WTC11 (cell line): ENCODE measurements at regions of chr20 and their contacts with region 1.

Region 1: GRCh38 chr20:63775096-63775978 is 35.8 kb downstream of the SLC2A4RG start:
- DNase-seq: peak; percentile 91
- ATAC-seq: peak; percentile 84
- H3K4me3 Mint-ChIP-seq: peak overlapping the region; percentile 80
- H3K27ac Mint-ChIP-seq: peak overlapping the region; percentile 93
- H3K4me1 Mint-ChIP-seq: peaks cover 14% of the 10 kb centered on the region
- H3K27me3 Mint-ChIP-seq: peaks cover 4% of the 10 kb centered on the region; the same call in 1 of the 2 replicates
- CTCF ChIP-seq: peak; percentile 95

Region 2: DNA sequence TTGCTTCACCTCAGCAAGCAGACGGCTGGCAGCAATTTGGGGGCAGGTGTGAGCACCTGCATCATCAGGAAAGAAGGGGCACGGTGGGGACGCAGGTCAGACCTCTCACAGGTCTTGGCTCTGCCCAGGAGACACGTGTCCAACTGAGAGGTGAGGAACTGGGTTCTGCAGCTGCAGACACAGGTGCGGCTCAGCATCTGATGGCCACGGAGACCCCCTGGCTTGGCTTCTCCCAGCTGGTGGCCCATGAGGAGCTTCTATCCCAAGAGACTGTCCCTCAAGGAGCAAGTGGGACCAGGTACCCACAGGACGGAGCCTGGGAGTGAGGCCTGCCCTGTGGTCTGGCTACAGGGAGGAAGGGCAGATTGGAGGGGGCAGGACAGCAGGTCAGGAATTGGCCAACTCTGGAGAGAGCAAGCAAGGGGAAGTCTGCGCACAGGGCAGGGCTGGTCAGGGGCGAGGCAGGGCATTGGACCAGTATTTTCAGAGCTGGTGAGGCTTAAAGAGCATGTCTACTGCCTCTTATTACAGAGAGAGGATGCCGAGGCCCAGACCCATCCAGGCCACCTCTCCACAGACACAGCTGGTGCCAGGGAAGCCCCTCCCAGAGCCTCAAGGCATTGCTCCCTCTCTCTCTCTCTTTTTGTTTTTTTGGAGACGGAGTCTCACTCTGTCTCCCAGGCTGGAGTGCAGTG is 126.3 kb before region 1 on chr20:
- CTCF ChIA-PET with region 1: no interaction called
- POLR2A ChIA-PET with region 1: no interaction called
- DNase-seq: no peak
- ATAC-seq: no peak
- H3K4me3 Mint-ChIP-seq: no peak overlapping the region
- H3K27ac Mint-ChIP-seq: peak overlapping the region; percentile 47; the same call in 1 of the 2 replicates
- H3K4me1 Mint-ChIP-seq: peaks cover 8% of the 10 kb centered on the region
- H3K27me3 Mint-ChIP-seq: peaks cover 3% of the 10 kb centered on the region; the same call in 1 of the 2 replicates
- CTCF ChIP-seq: no peak

Region 3: GRCh38 chr20:63707549-63708300 is 67.6 kb before region 1 on chr20 and contains the starts of genes ARFRP1 and ZGPAT:
- CTCF ChIA-PET with region 1: interaction called, 15 read pairs
- POLR2A ChIA-PET with region 1: no interaction called
- DNase-seq: peak; percentile 84
- ATAC-seq: peak; percentile 92
- H3K4me3 Mint-ChIP-seq: peak within 1 kb of the TSS; percentile 80
- H3K27ac Mint-ChIP-seq: peak within 1 kb of the TSS; percentile 58
- H3K4me1 Mint-ChIP-seq: peaks cover 10% of the 10 kb centered on the region
- H3K27me3 Mint-ChIP-seq: no peaks in the 10 kb centered on the region
- CTCF ChIP-seq: no peak
- total RNA-seq, gene ARFRP1: 24.3 to 30.2 TPM (median 27.4 TPM) in 3 replicates
- total RNA-seq, gene ZGPAT: 28.3 to 31.0 TPM (median 30.4 TPM) in 3 replicates

Region 4: DNA sequence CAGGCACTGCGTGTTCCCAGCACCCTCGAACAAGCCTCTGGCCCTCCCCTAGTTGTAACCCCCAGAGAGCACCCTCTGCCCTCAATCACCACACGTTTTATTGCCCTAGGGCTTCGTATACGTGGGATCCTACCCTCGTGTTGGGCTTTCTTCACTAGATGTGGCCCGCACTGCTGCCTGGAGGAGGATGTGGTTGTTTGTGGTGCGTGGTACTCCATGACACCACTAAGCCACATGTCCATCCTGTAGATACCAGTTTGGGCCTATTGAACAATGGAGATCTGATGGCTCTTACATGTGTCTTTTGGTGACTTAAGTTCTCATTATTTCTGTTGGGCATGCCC is 18.7 kb before region 1 on chr20:
- CTCF ChIA-PET with region 1: interaction called, 29 read pairs
- POLR2A ChIA-PET with region 1: interaction called, 3 read pairs
- DNase-seq: no peak
- ATAC-seq: no peak
- H3K4me3 Mint-ChIP-seq: no peak overlapping the region
- H3K27ac Mint-ChIP-seq: 0 out of 2 replicates have a peak overlapping the region, but pooled peaks have one; percentile 21
- H3K4me1 Mint-ChIP-seq: peaks cover 6% of the 10 kb centered on the region; the same call in 1 of the 2 replicates
- H3K27me3 Mint-ChIP-seq: no peaks in the 10 kb centered on the region
- CTCF ChIP-seq: no peak

Region 5: DNA sequence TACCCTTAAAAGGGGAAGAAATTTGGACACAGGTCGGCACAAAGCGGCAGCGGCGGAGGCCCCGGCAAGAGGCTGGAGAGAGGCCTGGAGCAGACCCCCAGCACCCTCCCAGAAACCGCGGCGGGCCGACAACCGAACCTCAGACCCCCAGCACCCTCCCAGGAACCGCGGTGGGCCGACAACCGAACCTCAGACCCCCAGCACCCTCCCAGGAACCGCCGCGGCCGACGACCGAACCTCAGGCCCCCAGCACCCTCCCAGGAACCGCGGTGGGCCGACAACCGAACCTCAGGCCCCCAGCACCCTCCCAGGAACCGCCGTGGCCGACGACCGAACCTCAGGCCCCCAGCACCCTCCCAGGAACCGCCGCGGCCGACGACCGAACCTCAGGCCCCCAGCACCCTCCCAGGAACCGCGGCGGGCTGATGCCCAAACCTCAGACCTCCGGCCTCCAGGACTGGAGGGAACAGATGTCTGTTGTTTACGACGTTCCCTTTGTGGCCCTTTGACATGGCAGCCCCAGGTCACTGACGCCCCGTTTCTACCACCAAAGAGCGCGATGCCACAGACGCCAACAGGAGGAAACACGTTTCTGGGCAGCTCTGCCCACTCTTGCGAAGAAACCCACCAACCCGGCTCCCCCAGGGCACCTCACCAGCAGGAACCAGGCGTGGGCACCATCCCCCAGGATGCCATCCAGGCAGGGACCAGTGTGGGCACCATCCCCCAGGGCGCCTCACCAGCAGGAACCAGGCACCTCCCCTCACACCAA is 27.3 kb after region 1 on chr20:
- CTCF ChIA-PET with region 1: interaction called, 10 read pairs
- POLR2A ChIA-PET with region 1: no interaction called
- DNase-seq: no peak
- ATAC-seq: no peak
- H3K4me3 Mint-ChIP-seq: no peak overlapping the region
- H3K27ac Mint-ChIP-seq: no peak overlapping the region
- H3K4me1 Mint-ChIP-seq: peaks cover 6% of the 10 kb centered on the region; the same call in 1 of the 2 replicates
- H3K27me3 Mint-ChIP-seq: no peaks in the 10 kb centered on the region
- CTCF ChIP-seq: no peak

Region 6: GRCh38 chr20:63846128-63846798 is 70.9 kb after region 1 on chr20:
- CTCF ChIA-PET with region 1: interaction called, 19 read pairs
- POLR2A ChIA-PET with region 1: interaction called, 5 read pairs
- DNase-seq: peak; percentile 70
- ATAC-seq: peak; percentile 65
- H3K4me3 Mint-ChIP-seq: peak overlapping the region; percentile 75
- H3K27ac Mint-ChIP-seq: peak overlapping the region; percentile 88
- H3K4me1 Mint-ChIP-seq: peaks cover 24% of the 10 kb centered on the region
- H3K27me3 Mint-ChIP-seq: no peaks in the 10 kb centered on the region; the same call in none of the 2 replicates
- CTCF ChIP-seq: no peak

Region 7: GRCh38 chr20:63876489-63877036 is 101.2 kb after region 1 on chr20:
- CTCF ChIA-PET with region 1: interaction called, 10 read pairs
- POLR2A ChIA-PET with region 1: no interaction called
- DNase-seq: no peak
- ATAC-seq: no peak
- H3K4me3 Mint-ChIP-seq: no peak overlapping the region
- H3K27ac Mint-ChIP-seq: no peak overlapping the region
- H3K4me1 Mint-ChIP-seq: no peaks in the 10 kb centered on the region
- H3K27me3 Mint-ChIP-seq: no peaks in the 10 kb centered on the region
- CTCF ChIP-seq: no peak

Region 8: DNA sequence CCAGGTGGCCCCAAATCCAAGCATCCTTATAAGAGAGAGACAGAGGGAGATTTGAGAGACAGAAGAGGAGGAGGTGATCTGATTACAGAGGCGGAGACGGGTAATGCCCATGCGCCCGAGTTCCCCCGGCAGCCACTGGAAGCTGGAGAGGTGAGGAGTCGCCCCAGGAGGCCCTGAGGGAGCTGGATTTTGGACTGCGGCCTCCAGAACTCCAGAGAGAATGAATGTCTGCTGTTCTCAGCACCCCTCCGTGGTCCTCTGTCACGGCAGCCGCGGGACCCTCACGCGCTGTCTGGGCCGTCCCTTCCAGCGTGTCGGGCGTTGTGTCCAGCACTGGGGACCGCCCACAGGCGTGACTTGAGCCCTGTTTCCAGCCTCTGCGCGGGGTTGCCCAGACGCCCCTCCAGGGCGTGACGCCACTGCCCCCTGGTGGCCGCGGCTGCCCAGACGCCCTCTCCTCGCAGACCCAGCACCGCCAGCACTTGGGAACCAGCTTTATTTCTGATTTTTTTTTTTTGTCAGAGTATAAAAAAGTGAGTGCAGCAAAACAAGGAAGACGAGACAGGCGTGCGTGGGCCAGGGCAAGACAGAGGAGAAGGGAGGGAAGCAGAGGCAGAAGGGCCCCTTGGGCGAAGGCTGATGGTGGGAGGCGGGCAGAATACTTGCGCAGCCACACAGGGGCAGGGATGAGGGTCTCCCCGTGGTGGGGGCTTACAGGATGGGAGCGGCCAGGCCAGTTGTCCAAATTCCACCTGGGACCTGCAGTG is 198.5 kb after region 1 on chr20:
- CTCF ChIA-PET with region 1: interaction called, 20 read pairs
- POLR2A ChIA-PET with region 1: no interaction called
- DNase-seq: peak; percentile 89
- ATAC-seq: peak; percentile 70
- H3K4me3 Mint-ChIP-seq: peak overlapping the region; percentile 55
- H3K27ac Mint-ChIP-seq: no peak overlapping the region
- H3K4me1 Mint-ChIP-seq: peaks cover 18% of the 10 kb centered on the region
- H3K27me3 Mint-ChIP-seq: peaks cover 34% of the 10 kb centered on the region
- CTCF ChIP-seq: peak; percentile 98